Activated CD4-positive, alpha-beta memory T cell treated with anti-CD3 and anti-CD28 coated beads for 36 hours (primary cell): ENCODE measurements at regions of chr4 and their contacts with region 1.

Region 1: DNA sequence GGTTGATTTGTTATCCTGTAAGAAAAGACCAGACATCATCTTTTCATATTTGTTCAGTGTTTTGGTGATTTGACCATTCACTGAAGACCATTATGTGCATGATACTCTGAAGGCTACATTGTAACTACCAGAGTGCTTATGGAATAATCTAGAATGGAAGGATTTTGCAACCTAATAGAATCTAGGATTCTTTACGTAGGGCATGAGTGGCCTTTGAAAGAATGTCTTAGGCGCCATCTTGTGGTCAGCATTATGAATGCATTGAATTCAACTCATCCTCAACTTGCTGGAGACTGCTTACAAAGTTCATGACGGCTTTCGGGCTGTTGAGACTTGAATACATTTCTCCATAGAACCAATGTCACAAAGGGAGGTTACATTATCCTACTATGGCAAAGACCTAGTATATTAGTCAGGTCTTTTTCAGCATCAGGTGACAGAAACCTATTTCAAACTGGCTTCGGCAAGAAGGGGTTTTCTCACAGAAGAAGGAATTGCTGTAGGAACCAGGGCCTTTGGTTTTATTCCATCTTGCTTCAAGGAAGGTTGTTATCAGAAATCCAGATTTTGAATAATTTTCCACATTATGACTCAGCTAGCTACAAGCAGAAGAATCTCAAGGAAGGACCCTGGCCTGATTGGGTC is 104.1 kb downstream of the GPAT3 start:
- DNase-seq: peak; percentile 48
- H3K4me3 Mint-ChIP-seq: no peak overlapping the region
- H3K27ac Mint-ChIP-seq: no peak overlapping the region
- H3K4me1 Mint-ChIP-seq: peaks cover 3% of the 10 kb centered on the region
- H3K27me3 Mint-ChIP-seq: peaks cover 1% of the 10 kb centered on the region

Region 2: DNA sequence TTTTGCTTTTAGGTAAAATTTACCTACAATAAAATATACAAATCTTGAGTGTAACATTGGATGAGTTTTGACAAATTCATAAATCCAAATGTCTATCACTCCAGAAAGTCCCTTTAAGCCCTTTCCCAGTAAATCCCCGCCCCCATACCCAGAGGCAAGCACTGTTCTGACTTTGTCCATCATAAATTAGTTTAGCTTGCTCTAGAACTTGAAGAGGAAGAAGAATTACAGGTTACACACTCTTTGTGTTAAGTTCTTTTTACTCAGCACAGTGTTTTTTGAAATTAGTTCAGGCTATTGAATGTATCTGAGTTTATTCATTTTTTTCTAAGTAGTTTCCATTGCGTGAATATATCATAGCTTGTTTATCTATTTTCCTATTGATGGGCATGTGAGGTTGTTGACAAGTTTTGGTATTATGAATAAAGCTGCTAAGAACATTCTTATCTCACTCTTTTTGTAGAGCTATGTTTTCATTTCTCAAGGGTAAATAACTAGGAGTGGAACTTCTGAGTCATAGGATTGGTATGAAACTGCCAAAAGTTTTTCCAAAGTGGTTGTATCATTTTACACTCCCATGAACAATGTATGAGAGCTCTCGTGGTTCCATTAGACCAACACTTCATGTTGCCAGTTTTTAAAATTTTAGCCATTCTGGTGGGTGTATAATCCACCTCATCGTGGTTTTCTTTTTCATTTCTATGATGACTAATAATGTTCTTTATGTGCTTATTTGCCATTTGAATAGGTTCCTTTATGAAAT is 282.9 kb before region 1 on chr4:
- CTCF ChIA-PET with region 1: no interaction called
- POLR2A ChIA-PET with region 1: no interaction called
- intact Hi-C with region 1: loop called (anchors 5 kb)
- DNase-seq: peak; percentile 65
- H3K4me3 Mint-ChIP-seq: peak overlapping the region; percentile 41
- H3K27ac Mint-ChIP-seq: peak overlapping the region; percentile 86
- H3K4me1 Mint-ChIP-seq: peaks cover 17% of the 10 kb centered on the region
- H3K27me3 Mint-ChIP-seq: no peaks in the 10 kb centered on the region

Region 3: GRCh38 chr4:83503974-83504373 is 136.0 kb before region 1 on chr4:
- CTCF ChIA-PET with region 1: interaction called, 124 read pairs
- POLR2A ChIA-PET with region 1: no interaction called
- intact Hi-C with region 1: loop called (anchors 1 kb)
- DNase-seq: peak; percentile 41
- H3K4me3 Mint-ChIP-seq: no peak overlapping the region
- H3K27ac Mint-ChIP-seq: no peak overlapping the region
- H3K4me1 Mint-ChIP-seq: peaks cover 8% of the 10 kb centered on the region
- H3K27me3 Mint-ChIP-seq: no peaks in the 10 kb centered on the region

Region 4: GRCh38 chr4:83535520-83536361 is 104.2 kb before region 1 on chr4 and contains the start of gene GPAT3:
- CTCF ChIA-PET with region 1: interaction called, 12 read pairs
- POLR2A ChIA-PET with region 1: no interaction called
- intact Hi-C with region 1: no loop called
- DNase-seq: peak; percentile 84
- H3K4me3 Mint-ChIP-seq: peak within 1 kb of the TSS; percentile 83
- H3K27ac Mint-ChIP-seq: peak within 1 kb of the TSS; percentile 44
- H3K4me1 Mint-ChIP-seq: peaks cover 16% of the 10 kb centered on the region
- H3K27me3 Mint-ChIP-seq: peaks cover 12% of the 10 kb centered on the region
- total RNA-seq, gene GPAT3: 4.2 to 7.2 TPM

Region 5: DNA sequence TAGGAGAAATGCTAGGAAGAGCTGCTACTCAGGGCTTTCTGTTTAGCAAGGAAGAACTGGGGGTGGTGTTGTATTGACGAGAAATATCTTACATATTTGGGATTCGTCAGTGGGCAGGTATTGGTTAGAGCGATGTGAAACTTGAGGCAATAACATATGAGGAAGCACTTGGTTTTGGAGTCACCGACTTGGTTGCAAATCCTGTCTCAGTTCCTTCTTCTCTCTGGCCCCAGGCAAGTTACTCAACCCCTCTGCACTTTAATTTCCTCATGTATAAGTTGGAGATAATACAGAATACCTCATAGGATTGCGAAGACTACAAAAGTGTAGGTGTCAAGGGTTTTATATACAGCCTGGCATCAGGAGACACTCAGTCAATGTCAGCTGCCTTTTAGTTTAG is 70.0 kb before region 1 on chr4:
- CTCF ChIA-PET with region 1: no interaction called
- POLR2A ChIA-PET with region 1: no interaction called
- intact Hi-C with region 1: no loop called
- DNase-seq: no peak
- H3K4me3 Mint-ChIP-seq: no peak overlapping the region
- H3K27ac Mint-ChIP-seq: no peak overlapping the region
- H3K4me1 Mint-ChIP-seq: no peaks in the 10 kb centered on the region
- H3K27me3 Mint-ChIP-seq: no peaks in the 10 kb centered on the region

Region 6: GRCh38 chr4:84451546-84451945 is 811.6 kb after region 1 on chr4:
- CTCF ChIA-PET with region 1: interaction called, 15 read pairs
- POLR2A ChIA-PET with region 1: no interaction called
- intact Hi-C with region 1: no loop called
- DNase-seq: no peak
- H3K4me3 Mint-ChIP-seq: no peak overlapping the region
- H3K27ac Mint-ChIP-seq: no peak overlapping the region
- H3K4me1 Mint-ChIP-seq: no peaks in the 10 kb centered on the region
- H3K27me3 Mint-ChIP-seq: peaks cover 5% of the 10 kb centered on the region

Region 7: GRCh38 chr4:84529169-84529751 is 889.3 kb after region 1 on chr4:
- CTCF ChIA-PET with region 1: interaction called, 21 read pairs
- POLR2A ChIA-PET with region 1: no interaction called
- intact Hi-C with region 1: loop called (anchors 1 kb)
- DNase-seq: no peak
- H3K4me3 Mint-ChIP-seq: no peak overlapping the region
- H3K27ac Mint-ChIP-seq: no peak overlapping the region
- H3K4me1 Mint-ChIP-seq: no peaks in the 10 kb centered on the region
- H3K27me3 Mint-ChIP-seq: peaks cover 21% of the 10 kb centered on the region